GM13976 (cell line): ENCODE measurements at regions of chr15 and their contacts with region 1.

Region 1: DNA sequence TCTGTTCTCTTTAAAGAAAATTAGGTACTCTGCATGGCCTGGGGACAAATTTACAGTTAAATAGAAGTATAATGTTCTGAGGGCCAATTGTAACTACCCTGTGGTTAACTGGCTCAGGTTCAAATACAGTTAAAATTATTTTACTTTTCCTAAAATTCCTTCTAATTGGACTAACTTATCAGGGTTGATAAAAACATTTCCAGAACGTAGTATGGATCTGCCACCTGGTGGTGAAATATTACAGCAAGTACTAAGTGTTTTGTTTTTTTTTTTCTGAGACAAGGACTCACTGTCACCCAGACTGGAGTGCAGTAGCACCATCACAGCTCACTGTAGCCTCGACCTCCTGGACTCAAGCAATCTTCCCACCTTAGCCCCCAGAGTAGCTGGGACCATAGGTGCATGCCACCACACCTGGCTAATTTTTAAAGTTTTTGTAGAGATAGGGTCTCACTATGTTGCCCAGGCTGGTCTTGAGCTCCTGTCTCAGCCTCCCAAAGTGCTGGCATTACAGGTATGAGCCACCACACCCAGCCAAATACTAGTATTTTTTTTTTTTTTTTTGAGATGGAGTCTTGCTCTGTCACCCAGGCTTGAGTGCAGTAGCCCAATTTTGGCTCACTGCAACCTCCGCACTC is 29.2 kb downstream of the NEO1 start:
- DNase-seq: no peak
- CTCF ChIP-seq: peak; percentile 34

Region 2: DNA sequence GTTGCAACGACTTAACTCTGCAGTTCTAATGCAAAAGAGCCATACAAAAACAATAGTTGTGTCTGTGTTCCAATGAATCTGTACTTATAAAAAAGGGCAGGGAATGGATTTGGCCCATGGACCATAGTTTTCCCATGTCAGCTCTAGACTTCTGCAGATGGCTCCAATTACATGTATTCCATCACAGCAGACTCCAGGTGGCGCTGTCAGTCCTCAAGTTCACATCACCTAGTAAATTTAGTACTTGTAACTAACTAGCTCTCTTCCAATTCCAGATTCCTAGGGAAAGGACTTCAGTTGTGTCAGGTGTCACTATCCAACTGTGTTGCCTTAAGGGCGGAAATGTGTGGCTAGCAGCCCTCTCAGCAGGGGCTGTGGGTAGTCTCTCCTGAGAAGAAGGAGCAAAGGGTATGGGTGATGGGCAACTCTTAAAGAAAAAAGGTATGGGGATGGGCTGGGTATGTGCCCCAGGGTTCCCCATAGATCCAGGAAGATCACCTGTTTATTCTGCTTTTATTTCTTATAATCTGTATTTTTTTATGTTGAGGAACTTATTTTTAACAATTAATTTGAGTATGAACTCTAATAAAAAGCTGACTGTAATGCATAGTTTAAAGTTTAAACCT is 359.3 kb before region 1 on chr15:
- in situ Hi-C with region 1: loop called (anchors 25 kb)
- DNase-seq: peak; percentile 47
- CTCF ChIP-seq: peak; percentile 84

Region 3: GRCh38 chr15:72796515-72797337 is 284.7 kb before region 1 on chr15:
- in situ Hi-C with region 1: loop called (anchors 10 kb)
- DNase-seq: peak; percentile 83
- CTCF ChIP-seq: peak; percentile 43

Region 4: GRCh38 chr15:72994534-72995177 is 86.8 kb before region 1 on chr15:
- in situ Hi-C with region 1: no loop called
- DNase-seq: no peak
- CTCF ChIP-seq: no peak

Region 5: GRCh38 chr15:73225358-73226015 is 144.0 kb after region 1 on chr15:
- in situ Hi-C with region 1: no loop called
- DNase-seq: no peak
- CTCF ChIP-seq: no peak

Region 6: GRCh38 chr15:73368301-73369136 is 287.1 kb after region 1 on chr15 and contains the start of gene HCN4:
- in situ Hi-C with region 1: no loop called
- DNase-seq: no peak
- CTCF ChIP-seq: no peak